ENCODE measurements at regions of chr2 and their contacts with region 1.

Region 1: DNA sequence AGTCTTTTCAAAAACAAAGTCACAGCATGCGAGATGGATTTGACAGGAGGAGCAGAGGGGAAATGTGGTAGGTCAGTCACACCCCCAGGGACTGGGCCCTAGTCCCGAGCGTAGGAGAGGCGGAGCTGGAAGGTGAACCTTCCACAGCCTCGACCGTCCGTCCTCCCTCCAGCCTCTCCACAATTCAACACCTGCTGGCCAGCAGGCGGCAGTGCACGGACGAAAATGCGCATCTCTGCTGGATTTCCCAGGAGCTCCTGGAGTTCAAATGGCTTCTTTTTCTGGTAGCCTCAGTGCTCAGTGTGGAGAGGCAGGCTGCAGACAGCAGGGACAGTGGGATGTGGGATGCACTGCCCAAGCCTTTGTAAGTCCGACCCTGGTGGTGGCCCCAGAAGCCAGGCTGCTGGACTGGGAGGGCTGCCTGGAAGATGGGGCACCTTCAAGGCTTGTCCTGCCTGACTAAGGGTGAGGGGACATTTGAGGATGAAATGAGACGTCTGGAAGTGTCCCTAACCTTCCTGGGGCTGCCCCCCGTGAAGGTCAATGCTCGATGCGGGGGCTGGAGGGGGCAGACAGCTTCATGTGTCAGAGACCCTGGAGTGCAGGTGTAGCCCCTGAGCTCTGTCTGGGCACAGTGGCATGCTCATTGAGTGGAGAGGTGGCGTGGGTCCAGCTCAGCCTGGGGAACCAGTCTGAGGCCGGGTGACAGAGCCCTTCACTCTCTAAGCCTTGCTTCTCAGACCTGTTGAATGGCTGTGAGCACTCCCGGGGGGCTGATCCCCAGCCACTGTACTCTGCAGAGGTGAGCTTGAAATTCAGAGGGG is 189.5 kb downstream of the TFCP2L1 start:
- DNase-seq: peak in 9 of 10 donors; percentile 49 to 79 (median 67)
- H3K4me3 ChIP-seq: no peak overlapping the region
- H3K27ac ChIP-seq: no peak overlapping the region
- H3K27me3 ChIP-seq: no peaks in the 10 kb centered on the region
- CTCF ChIP-seq: peak; percentile 22 to 79 (median 71)

Region 2: GRCh38 chr2:121220995-121221394 is 125.5 kb after region 1 on chr2:
- intact Hi-C with region 1: no loop called
- DNase-seq: no peak
- H3K4me3 ChIP-seq: no peak overlapping the region
- H3K27ac ChIP-seq: no peak overlapping the region
- H3K27me3 ChIP-seq: no peaks in the 10 kb centered on the region
- CTCF ChIP-seq: no peak

Region 3: DNA sequence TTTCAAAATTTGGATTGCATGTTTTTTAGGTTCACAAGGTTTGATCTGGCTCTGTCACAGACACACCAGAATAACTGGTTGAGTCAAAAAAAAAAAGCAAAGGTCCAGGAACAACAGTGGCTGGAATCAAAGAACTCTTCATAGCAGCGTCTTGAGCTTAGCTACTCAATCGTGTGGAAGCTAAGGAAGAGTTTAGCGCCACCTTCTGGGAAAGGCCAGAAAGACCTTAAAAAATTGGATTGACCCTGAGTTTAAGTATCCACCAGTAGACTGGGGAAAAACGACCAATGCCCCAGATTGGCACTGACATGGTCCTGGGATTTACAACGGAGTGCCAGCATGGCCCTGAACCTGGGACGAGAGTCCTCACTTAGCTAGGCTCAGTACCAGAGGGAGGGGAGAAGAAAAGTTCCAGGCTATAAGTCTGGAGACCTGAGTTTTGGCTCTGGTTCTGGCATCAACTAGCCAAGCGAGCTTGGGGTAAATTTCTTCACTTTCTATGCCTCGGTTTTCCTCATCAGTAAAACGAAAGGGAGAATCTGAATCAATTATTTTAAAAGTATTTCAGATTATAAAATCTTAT is 260.7 kb after region 1 on chr2:
- intact Hi-C with region 1: loop called (anchors 2 kb)
- DNase-seq: peak in 2 of 10 donors; percentile 48 to 49
- H3K4me3 ChIP-seq: no peak overlapping the region
- H3K27ac ChIP-seq: peak overlapping the region in 14 of 59 donors; percentile 6 to 50 (median 25)
- H3K27me3 ChIP-seq: no peaks in the 10 kb centered on the region
- CTCF ChIP-seq: peak; percentile 48 to 87 (median 72)

Region 4: DNA sequence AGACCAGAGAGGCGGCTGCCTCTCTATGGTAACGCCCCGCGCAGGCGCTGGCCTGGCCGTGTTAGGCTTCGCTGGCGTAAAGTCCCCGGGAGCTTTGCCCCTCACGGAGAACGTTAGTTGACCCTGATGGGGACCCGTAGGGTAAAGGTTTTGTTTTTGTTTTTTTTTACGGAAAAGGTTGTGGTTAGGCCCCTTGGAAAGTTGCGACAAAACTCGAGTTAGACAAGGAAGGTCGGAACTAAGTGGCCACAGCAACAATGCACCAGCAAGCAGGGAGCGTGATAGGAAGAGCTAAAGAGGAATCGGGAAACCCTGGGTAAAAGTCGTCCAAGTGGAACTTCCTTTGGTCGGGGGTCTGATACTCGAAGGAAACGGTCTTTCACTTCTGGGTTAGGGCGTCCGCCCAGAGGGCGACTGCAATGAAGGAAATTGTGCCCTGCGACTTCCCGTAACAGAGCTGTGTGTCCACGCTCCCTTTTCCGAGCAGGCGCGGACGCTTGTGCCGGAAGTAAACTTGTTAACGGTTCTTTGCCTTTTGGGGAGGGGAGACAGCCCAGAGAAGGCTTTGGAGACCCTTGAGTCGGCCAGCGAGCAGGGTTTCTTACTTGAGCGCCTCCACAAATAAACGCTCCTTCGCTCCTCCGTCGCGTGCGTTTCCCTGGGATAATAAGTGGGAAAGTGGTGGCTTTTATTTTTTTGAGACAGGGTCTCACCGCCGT is 554.3 kb after region 1 on chr2:
- intact Hi-C with region 1: no loop called
- DNase-seq: peak; percentile 91 to 97 (median 96)
- H3K4me3 ChIP-seq: peak overlapping the region; percentile 56 to 98 (median 92)
- H3K27ac ChIP-seq: peak overlapping the region; percentile 87 to 100 (median 98)
- H3K27me3 ChIP-seq: no peaks in the 10 kb centered on the region
- CTCF ChIP-seq: peak in 18 of 56 donors; percentile 2 to 40 (median 12)

Region 5: DNA sequence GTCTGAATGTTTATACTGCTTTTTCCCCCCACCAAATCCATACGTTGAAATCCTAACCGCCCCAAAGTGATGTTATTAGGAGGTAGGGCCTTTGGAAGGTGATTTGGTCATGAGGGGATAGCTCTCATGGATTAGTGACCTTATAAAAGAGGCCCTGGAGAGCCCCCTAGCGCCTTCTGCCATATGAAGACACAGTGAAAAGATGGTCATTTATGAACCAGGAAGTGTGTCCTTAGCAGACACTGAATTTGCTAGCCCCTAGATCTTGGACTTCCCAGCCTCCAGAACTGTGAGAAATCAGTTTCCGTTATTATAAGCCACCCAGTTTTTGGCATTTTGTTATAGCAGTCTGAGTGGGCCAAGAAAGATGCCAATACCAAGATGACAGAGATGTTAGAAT is 652.7 kb after region 1 on chr2:
- intact Hi-C with region 1: loop called in 1 of 2 experiments (anchors 10 kb)
- DNase-seq: no peak
- H3K4me3 ChIP-seq: no peak overlapping the region
- H3K27ac ChIP-seq: no peak overlapping the region
- H3K27me3 ChIP-seq: no peaks in the 10 kb centered on the region
- CTCF ChIP-seq: peak in 8 of 56 donors; percentile 13 to 35 (median 28)

Measured in dorsolateral prefrontal cortex (tissue), 120 donors.